ENCODE measurements at regions of chr11 and their contacts with region 1.

Region 1: DNA sequence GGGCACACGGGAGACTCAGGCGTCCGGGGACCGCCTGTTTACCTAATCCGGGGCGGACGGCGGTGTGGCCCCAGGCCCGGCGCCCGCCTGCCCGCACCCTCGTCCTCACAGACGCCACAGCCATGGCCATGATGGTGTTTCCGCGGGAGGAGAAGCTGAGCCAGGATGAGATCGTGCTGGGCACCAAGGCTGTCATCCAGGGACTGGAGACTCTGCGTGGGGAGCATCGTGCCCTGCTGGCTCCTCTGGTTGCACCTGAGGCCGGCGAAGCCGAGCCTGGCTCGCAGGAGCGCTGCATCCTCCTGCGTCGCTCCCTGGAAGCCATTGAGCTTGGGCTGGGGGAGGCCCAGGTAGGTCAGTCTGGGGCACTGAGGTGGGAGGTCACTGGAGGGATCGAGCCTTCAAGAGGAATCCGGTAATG is 10.0 kb upstream of the RAB1B start:
- DNase-seq: no peak
- ATAC-seq: no peak
- H3K4me3 ChIP-seq: peak overlapping the region in 4 of 5 experiments; percentile 87 to 99 (median 96)
- H3K4me3 Mint-ChIP-seq: peak overlapping the region; percentile 98
- H3K27ac ChIP-seq: peak overlapping the region; percentile 85
- H3K27ac Mint-ChIP-seq: peak overlapping the region; percentile 98
- H3K4me1 ChIP-seq: peaks cover 13 to 18% of the 10 kb centered on the region in 2 donors
- H3K4me1 Mint-ChIP-seq: peaks cover 25% of the 10 kb centered on the region
- H3K27me3 ChIP-seq: no peaks in the 10 kb centered on the region
- H3K27me3 Mint-ChIP-seq: no peaks in the 10 kb centered on the region
- CTCF ChIP-seq: peak; percentile 40

Region 2: GRCh38 chr11:65558002-65558931 is 700.2 kb before region 1 on chr11 and contains the start of gene LTBP3:
- CTCF ChIA-PET with region 1: no interaction called
- POLR2A ChIA-PET with region 1: interaction called, 10 read pairs
- intact Hi-C with region 1: no loop called
- DNase-seq: peak; percentile 52
- ATAC-seq: peak; percentile 60
- H3K4me3 ChIP-seq: peak within 1 kb of the TSS; percentile 22 to 62 (median 54)
- H3K4me3 Mint-ChIP-seq: peak within 1 kb of the TSS; percentile 81
- H3K27ac ChIP-seq: peak within 1 kb of the TSS; percentile 57 to 62
- H3K27ac Mint-ChIP-seq: peak within 1 kb of the TSS; percentile 68
- H3K4me1 ChIP-seq: peaks cover 11 to 33% of the 10 kb centered on the region in 2 donors
- H3K4me1 Mint-ChIP-seq: peaks cover 28% of the 10 kb centered on the region
- H3K27me3 ChIP-seq: no peaks in the 10 kb centered on the region
- H3K27me3 Mint-ChIP-seq: peaks cover 3% of the 10 kb centered on the region
- CTCF ChIP-seq: no peak
- total RNA-seq, gene LTBP3: 69.0 and 69.7 TPM in 2 replicates

Region 3: DNA sequence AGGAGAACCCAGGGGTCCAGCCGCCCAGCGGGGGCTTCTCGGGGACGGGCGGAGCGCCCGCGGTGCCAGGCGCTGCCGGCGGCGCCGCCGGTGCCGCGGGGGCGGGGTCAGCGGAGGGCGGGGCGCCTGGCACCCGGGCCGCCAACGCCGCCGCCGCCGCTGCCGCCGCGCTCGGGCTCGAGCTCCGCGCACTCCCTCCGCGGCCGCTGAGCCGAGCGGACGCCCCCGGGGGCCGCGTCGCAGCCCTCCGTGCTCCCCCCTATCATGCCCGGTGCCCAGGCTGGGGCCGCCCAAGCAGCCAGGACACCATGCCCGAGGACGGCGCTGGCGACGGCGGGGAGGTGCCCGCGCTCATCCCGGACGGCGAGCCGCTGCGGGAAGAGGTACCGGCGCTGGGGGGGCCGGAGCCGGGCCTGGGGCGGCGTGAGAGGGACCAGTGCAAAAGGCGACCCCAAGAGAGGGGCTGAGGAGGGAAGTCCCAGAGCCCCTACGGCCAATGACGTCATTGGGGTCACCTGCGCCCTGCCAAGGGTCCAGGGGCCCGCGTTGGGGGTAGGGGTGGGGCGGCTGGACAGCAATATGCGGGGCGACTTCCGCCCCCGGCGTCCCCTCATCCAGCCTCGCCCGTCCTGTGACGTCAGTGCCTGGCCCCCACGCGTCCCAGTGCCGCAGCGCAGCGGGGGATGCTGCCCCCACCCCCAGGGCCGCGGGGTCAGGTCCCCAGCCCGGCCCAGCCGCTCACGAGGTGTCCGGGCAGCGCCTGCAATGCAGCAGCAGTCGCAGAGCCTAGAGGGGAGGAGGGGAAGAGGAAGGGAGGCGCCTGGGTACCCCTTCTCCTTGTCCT is 33.4 kb after region 1 on chr11 and contains the start of gene TMEM151A:
- CTCF ChIA-PET with region 1: no interaction called
- POLR2A ChIA-PET with region 1: no interaction called
- intact Hi-C with region 1: no loop called
- DNase-seq: peak; percentile 62
- ATAC-seq: no peak
- H3K4me3 ChIP-seq: peak within 1 kb of the TSS in 3 of 5 experiments; percentile 50 to 55 (median 53)
- H3K4me3 Mint-ChIP-seq: peak within 1 kb of the TSS; percentile 95
- H3K27ac ChIP-seq: no peak within 1 kb of the TSS
- H3K27ac Mint-ChIP-seq: no peak within 1 kb of the TSS
- H3K4me1 ChIP-seq: peaks cover 34 to 39% of the 10 kb centered on the region in 2 donors
- H3K4me1 Mint-ChIP-seq: peaks cover 34% of the 10 kb centered on the region
- H3K27me3 ChIP-seq: peaks cover 2 to 33% (median 15%) of the 10 kb centered on the region in 4 experiments
- H3K27me3 Mint-ChIP-seq: peaks cover 18% of the 10 kb centered on the region
- CTCF ChIP-seq: no peak
- total RNA-seq, gene TMEM151A: 0.17 TPM in 1 of 2 replicates, not detected in the other

Measured in B cell (primary cell).